ENCODE measurements at regions of chr12 and their contacts with region 1.

Region 1: DNA sequence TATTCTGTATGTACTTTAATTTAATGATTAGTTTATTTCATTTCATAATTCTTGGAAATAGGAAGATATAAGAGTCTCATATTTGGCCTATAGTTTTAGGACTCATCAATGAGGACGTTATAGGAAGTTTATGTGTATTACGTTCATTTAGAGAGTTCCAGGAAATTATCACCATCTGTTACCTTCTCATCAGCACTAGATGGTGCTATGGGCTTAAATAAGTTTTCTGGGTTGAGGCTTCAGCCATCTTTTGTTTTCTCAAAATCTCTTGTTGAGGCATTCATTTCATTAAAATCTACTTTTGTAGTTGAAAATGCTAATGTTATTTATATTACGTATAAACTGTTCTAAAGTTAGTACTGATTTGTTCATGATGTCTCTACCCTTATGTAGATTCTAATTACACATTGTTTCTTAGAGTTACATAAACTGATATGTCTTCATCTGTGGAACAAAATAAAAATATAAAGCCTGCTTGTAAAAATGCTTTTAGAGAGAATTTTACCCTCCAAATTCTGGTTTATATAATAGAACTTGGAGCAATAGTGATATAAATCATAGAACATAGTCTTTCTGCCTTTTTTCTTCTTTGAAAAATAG is 89.2 kb downstream of the CFAP54 start:
- DNase-seq: peak in 1 of 2 donors; percentile 6
- ATAC-seq: peak in 1 of 8 donors; percentile 58
- H3K4me3 ChIP-seq: no peak overlapping the region
- H3K27ac ChIP-seq: no peak overlapping the region
- H3K4me1 ChIP-seq: peaks cover 0 to 6% (median 0%) of the 10 kb centered on the region in 9 donors
- H3K27me3 ChIP-seq: peaks cover 0 to 4% (median 0%) of the 10 kb centered on the region in 7 donors
- CTCF ChIP-seq: peak; percentile 21 to 76 (median 65)

Region 2: DNA sequence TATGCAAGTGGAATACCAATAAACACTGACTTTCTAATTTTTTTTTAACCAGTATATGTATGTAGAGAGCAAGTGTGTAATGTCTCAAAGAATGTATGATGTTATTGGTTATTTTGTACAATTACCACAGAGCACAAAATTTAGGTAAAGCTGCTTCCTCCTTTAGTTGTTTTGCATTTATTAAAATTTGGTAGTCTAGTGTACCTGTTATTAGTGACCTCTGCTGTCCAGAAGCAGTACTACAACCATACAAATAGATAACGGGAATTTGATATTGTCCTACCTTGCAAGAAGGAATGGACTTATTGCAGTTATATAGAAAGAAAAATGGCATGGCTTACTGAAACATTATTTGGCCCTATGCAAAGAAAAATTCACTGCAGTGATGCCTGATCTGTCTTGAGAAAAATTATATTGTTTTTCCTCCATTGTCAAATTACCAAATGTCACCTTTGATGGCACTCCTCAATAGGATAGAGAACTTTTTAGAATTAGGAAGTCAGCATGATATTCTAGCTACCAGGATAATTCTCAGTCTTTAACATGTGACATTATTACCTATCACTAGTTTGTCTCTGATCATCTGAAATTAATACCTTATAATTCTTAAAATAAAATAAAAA is 730.1 kb after region 1 on chr12:
- intact Hi-C with region 1: loop called in 9 of 10 experiments (anchors 1 to 10 kb)
- DNase-seq: peak in 1 of 2 donors; percentile 20
- ATAC-seq: no peak
- H3K4me3 ChIP-seq: no peak overlapping the region
- H3K27ac ChIP-seq: no peak overlapping the region
- H3K4me1 ChIP-seq: peaks cover 0 to 6% (median 0%) of the 10 kb centered on the region in 9 donors
- H3K27me3 ChIP-seq: peaks cover 0 to 10% (median 0%) of the 10 kb centered on the region in 7 donors
- CTCF ChIP-seq: peak; percentile 52 to 87 (median 77)

Region 3: DNA sequence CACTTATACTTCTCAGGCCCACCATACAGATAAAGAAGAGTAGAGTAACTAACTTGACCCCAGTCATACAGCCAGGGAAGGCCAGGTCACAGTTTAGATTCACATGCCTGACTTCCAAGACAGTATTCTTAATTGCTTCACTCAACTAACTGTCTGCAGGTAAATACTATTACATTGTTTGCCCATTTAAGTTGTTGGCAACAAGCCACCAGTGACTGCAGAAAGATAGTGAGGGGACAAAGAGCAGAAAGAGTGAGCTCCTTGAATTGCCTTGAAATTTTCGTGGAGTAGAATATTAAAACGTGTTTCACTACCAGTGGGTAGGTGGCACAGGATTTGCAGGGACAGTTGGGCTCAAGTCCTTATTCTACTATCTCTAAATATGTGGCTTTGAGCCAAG is 737.7 kb after region 1 on chr12:
- intact Hi-C with region 1: loop called in 1 of 10 experiments (anchors 5 kb)
- DNase-seq: no peak
- ATAC-seq: no peak
- H3K4me3 ChIP-seq: no peak overlapping the region
- H3K27ac ChIP-seq: no peak overlapping the region
- H3K4me1 ChIP-seq: no peaks in the 10 kb centered on the region
- H3K27me3 ChIP-seq: peaks cover 0 to 6% (median 0%) of the 10 kb centered on the region in 7 donors
- CTCF ChIP-seq: no peak

Region 4: GRCh38 chr12:97404543-97404942 is 825.9 kb after region 1 on chr12:
- intact Hi-C with region 1: loop called in 3 of 10 experiments (anchors 2 to 10 kb)
- DNase-seq: peak in 1 of 2 donors; percentile 11
- ATAC-seq: no peak
- H3K4me3 ChIP-seq: no peak overlapping the region
- H3K27ac ChIP-seq: no peak overlapping the region
- H3K4me1 ChIP-seq: no peaks in the 10 kb centered on the region
- H3K27me3 ChIP-seq: no peaks in the 10 kb centered on the region
- CTCF ChIP-seq: peak; percentile 31 to 71 (median 61)